ENCODE measurements at regions of chr1 and their contacts with region 1.

Region 1: GRCh38 chr1:1899266-1899966 is 8.5 kb upstream of the GNB1 start:
- DNase-seq: peak in 1 of 5 donors; percentile 39
- ATAC-seq: no peak
- H3K4me3 ChIP-seq: no peak overlapping the region
- H3K27ac ChIP-seq: no peak overlapping the region
- H3K4me1 ChIP-seq: peaks cover 0 to 12% (median 10%) of the 10 kb centered on the region in 12 donors
- H3K27me3 ChIP-seq: peaks cover 0 to 4% (median 0%) of the 10 kb centered on the region in 9 donors
- CTCF ChIP-seq: no peak
- POLR2A ChIP-seq: no peak

Region 2: DNA sequence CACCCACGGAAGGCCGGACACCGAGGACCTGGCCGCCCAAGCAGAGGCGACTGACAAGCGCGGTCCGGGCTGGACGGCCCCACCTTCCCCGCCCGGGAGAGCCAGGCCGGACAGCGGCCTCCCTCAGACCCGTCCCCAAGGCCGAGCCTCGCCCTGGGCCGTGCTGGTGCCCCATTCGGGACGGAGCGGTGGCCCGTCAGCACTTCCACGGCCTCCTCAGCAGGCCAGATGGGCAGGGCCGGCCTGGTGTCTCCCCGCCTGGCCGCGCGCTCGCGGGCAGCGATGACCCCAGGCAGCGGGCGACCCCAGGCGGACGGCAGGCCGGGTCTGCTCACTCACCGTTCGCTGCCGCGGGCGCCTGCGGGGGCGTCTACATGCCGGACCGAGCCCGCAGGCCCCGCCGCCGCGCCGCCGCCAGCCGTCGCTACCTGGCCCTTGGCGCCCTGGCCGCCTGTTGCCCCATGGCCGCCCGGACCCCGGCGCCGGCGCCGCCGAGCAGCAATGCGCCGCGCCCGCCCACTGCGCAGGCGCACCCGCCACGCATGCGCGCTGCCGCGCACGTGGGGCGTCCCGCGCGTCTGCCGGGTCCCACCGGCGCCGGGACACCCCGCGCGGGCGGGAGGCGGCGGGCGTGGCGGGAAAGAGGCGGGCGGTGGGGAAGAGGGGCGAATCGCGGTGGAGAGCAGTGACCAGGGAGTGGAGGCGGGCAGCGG is 121.3 kb before region 1 on chr1 and contains the start of gene NADK:
- intact Hi-C with region 1: loop called in 4 of 10 experiments (anchors 5 to 10 kb)
- DNase-seq: peak; percentile 61 to 85 (median 68)
- ATAC-seq: peak; percentile 19 to 62 (median 42)
- H3K4me3 ChIP-seq: peak within 1 kb of the TSS; percentile 71 to 92 (median 82)
- H3K27ac ChIP-seq: peak within 1 kb of the TSS; percentile 87 to 97 (median 94)
- H3K4me1 ChIP-seq: peaks cover 7 to 82% (median 65%) of the 10 kb centered on the region in 12 donors
- H3K27me3 ChIP-seq: no peaks in the 10 kb centered on the region
- CTCF ChIP-seq: peak in 1 of 12 donors; percentile 20
- POLR2A ChIP-seq: peak in 1 of 2 donors; percentile 40
- total RNA-seq, gene NADK: 17.7 to 45.2 (median 23.3) TPM

Region 3: DNA sequence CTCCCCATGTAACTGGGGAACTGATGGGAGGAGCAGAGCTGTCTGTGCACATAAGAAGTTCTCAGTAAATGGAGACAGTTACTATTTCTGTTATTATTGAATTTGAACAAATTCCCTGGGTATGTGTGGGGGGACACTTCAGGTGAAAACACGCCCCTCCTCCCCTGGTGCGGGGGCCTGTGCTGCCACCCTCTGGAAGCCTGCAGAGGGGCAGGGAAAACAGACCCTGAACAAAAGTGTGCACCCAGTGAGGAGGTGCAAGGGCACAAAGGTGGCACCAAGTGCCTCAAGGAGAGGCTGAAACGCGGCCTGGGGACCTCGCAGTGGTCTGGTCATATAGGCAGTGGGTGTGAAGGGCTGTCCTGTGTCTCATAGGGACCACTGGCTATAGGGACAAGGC is 103.0 kb before region 1 on chr1:
- intact Hi-C with region 1: loop called in 1 of 10 experiments (anchors 5 kb)
- DNase-seq: peak in 1 of 5 donors; percentile 30
- ATAC-seq: no peak
- H3K4me3 ChIP-seq: no peak overlapping the region
- H3K27ac ChIP-seq: no peak overlapping the region
- H3K4me1 ChIP-seq: peaks cover 0 to 18% (median 10%) of the 10 kb centered on the region in 12 donors
- H3K27me3 ChIP-seq: no peaks in the 10 kb centered on the region
- CTCF ChIP-seq: peak in 6 of 12 donors; percentile 6 to 24 (median 18)
- POLR2A ChIP-seq: no peak

Measured in heart left ventricle (tissue), 16 donors.